Ovary (tissue), 10 donors: ENCODE measurements at regions of chr16 and their contacts with region 1.

Region 1: DNA sequence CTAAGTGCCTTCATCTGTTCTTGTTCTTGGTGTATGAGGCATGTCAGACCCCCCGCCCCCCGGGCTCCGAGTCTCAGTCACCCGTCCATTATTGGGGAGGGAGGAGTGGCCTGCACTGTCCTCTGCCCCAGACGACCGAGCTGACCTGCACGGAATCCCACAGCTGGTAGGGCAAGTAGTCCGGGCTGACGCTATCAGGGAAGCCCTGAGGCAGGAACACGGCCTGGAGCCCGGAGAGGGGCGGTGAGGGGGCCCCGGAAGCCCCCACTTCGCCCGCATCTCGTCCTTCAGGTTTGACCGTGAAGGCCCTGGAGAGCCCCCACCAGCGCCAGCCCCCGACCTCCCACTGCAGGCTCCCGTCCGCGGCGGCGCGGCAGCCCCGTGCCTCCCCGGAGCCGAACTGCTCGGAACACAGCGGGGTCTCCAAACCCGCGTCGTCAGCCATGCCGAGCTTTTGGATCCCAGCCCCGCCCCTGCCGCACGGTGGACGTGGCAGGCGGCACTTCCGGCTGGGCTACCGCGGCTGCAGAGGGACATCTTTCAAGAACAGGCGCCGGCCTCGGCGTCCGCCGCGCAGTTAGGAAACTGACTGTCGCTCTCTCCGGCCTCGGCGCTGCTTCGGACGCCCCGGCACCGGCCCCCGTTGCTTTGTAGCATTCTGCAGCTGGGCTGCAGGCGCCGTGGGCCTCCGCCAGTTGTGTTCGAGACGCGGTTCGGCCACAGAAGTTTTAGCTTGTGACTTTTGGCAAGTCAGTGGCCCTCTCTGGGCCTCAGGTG is at the start of gene RUSF1:
- DNase-seq: peak; percentile 89 to 94 (median 91)
- H3K4me3 ChIP-seq: peak within 1 kb of the TSS; percentile 85
- H3K27ac ChIP-seq: peak within 1 kb of the TSS; percentile 52 to 92
- H3K4me1 ChIP-seq: peaks cover 2% of the 10 kb centered on the region
- H3K27me3 ChIP-seq: no peaks in the 10 kb centered on the region
- CTCF ChIP-seq: peak in 1 of 3 donors; percentile 27
- EP300 ChIP-seq: no peak
- POLR2A ChIP-seq: peak; percentile 87
- total RNA-seq, gene RUSF1: 59.0 to 98.4 (median 91.2) TPM

Region 2: DNA sequence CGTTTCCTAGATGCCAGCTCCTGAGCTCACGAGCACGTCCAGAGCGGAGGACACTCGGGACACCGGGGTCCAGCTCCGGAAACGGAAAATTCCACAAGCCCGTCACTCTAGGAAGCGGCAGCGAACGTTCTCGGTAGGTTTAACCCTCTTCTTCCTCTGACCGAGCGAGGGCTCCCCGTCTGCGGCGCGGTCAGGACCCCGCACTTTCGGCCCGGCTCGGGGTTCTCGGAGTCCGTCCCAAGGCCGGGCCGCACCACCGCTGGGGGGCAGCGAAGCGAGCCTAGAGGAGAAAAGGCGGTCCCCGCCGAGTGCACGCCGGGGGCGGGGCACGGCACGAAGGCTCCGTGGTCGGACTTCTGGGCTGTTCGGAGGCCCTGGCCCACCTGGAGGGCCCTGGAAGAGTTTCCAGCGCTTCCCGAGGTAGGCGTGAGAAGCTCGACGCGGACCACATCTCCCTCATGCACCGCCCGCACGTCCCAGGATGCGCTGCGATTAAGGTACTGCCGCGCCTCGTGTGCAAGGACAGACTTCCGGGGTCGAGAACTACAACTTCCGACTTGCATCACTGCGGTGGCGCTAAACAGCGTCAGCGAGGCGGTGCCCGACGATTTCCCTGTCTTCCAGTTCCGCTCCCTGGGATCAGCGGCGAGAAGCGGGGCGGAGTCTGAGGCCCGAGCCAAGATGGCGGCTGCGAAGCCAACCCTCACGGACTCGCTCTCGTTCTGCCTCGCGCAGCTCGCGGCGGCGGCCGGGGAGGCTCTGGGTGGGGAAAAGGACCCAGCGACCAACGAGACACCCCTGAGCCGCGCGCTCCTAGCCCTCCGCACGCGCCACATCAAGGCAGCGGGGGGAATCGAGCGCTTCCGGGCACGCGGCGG is 49.0 kb before region 1 on chr16 and contains the start of gene ARMC5:
- intact Hi-C with region 1: loop called in 1 of 4 experiments (anchors 2 kb)
- DNase-seq: peak; percentile 97 to 98 (median 98)
- H3K4me3 ChIP-seq: peak within 1 kb of the TSS; percentile 87
- H3K27ac ChIP-seq: peak within 1 kb of the TSS; percentile 97 to 98
- H3K4me1 ChIP-seq: peaks cover 16% of the 10 kb centered on the region
- H3K27me3 ChIP-seq: no peaks in the 10 kb centered on the region
- CTCF ChIP-seq: peak; percentile 51 to 81 (median 74)
- EP300 ChIP-seq: peak; percentile 58
- POLR2A ChIP-seq: peak; percentile 86
- total RNA-seq, gene ARMC5: 8.1 to 16.1 (median 11.0) TPM

Region 3: DNA sequence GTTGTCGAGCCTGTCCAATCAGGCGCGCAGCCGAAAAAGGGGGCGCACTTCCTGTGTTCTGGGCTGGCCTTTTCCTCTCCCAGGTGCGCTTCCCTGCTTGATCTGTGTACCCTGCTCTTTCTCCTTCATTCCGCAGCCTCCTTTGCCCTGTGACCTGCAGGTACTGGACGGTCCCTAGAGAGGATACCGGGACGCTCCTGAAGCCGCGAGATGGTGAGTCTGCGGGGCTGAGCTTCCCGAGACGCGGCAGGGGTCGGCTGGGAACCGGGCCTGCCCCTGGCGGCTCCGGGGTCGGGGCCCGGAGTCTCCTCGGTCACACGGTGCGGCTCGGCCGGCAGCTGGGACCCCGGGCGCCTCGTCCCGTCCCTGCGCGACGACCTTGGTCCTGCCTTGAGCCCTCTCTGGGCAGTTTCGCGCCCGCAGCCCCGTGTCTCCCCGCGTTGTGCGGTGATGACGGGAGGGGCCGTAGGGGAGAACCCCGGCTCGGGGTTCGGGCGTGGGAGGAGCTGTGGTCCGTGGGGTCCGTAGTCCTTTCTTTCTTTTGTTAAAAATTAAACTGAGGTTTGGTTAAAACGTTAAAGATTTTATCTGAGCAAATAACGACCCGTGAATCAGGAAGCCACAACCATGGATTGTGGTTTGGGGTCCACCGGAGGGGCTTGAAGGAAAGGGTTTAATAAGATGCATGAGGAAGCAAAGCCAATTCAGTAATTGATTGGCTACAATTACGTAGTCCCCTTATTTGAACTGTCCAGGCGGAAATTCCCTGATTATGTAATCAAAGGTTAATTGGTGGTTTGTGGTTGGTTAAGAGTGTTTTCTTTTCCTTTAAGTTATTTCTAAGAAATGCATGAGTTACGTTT is 192.6 kb after region 1 on chr16:
- intact Hi-C with region 1: loop called in 1 of 4 experiments (anchors 10 kb)
- DNase-seq: peak; percentile 79 to 88 (median 84)
- H3K4me3 ChIP-seq: peak overlapping the region; percentile 78
- H3K27ac ChIP-seq: peak overlapping the region in 1 of 2 donors; percentile 49
- H3K4me1 ChIP-seq: no peaks in the 10 kb centered on the region
- H3K27me3 ChIP-seq: no peaks in the 10 kb centered on the region
- CTCF ChIP-seq: no peak
- EP300 ChIP-seq: no peak
- POLR2A ChIP-seq: no peak